Activated T-helper 1 cell treated with anti-CD3 and anti-CD28 coated beads, Interleukin-12 subunit alpha, Interleukin-12 subunit beta, Interleukin-2, Interleukin-4 antibody, amounts not matched to agents 30 ng/mL and 10 ng/mL and 1 ng/mL, durations not matched to agents 14 hours and 24 hours and 36 hours (primary cell): ENCODE measurements at regions of chr1 and their contacts with region 1.

Region 1: DNA sequence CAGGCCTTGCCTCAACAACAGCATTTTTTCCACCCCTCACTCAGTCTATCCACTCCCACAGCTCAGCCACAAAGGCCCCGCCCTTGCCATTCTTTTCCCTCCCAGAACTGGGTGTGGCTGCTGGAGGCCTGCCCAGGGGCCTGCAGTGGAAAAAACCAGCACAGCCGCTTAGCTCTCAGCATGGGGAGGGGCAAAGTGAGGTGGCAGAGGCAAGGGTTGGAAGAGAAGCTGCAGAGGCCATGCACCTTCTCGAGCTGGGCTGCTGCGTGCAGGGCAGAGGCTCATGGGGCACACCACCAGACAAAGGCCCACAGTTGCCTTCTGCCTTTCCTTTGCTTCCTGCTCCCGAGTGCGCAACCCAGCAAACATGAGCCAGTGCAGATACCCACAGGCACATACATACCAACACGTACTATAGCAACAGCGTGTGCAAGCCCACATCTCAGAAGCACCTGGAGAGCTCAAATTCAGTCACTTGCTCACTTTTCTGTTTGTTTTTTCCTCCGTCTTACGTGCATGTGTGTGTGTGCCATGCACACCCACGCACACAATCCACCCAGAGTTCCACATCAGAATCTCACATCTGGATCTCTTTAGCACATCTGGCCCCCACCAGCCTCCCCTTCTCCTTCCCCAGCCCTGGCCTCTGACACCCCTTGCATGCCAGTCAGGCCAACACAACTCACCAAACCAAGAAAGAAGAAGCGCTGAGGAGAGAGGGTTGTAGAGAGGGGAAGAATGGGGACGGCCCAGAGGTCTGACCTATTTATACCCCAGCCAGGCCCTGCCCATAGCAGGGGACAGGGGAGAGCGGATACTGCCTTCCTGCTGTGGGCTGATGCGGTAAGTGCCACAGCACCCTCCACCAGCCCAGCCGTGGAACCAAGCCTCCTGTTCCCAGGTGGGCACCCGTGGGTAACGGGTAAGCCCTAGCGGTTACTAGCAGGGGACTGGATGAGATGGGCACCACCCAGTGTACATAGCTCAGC is at the start of gene S100A4:
- DNase-seq: peak; percentile 93
- H3K4me3 Mint-ChIP-seq: peak within 1 kb of the TSS; percentile 90
- H3K27ac Mint-ChIP-seq: peak within 1 kb of the TSS; percentile 99
- H3K4me1 Mint-ChIP-seq: peaks cover 83% of the 10 kb centered on the region
- H3K27me3 Mint-ChIP-seq: peaks cover 2% of the 10 kb centered on the region
- total RNA-seq, gene S100A4: 165 and 167 TPM in 2 replicates

Region 2: DNA sequence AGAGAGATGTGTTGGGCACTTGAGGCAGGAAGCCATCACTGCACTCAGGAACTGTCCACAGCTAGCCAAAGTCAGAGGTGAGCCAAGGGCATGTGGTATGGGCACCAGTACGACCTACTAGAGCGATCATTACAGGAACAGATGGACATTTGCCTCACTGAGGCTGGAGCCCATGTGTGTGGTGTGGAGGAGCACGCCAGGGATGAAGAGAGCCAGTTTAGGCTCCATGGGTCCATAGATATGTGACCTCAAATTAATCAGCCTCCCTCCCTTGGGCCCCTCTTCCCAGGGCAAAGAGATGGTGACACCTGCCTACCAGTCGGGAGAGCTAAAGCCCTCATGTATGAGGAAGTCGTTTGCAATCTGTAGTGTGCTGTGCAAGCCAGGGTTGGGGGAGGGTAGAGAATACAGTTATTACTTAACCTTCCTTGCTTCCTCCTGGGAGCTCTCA is 200.8 kb before region 1 on chr1:
- intact Hi-C with region 1: no loop called
- DNase-seq: no peak
- H3K4me3 Mint-ChIP-seq: no peak overlapping the region
- H3K27ac Mint-ChIP-seq: no peak overlapping the region
- H3K4me1 Mint-ChIP-seq: peaks cover 51% of the 10 kb centered on the region
- H3K27me3 Mint-ChIP-seq: peaks cover 19% of the 10 kb centered on the region

Region 3: DNA sequence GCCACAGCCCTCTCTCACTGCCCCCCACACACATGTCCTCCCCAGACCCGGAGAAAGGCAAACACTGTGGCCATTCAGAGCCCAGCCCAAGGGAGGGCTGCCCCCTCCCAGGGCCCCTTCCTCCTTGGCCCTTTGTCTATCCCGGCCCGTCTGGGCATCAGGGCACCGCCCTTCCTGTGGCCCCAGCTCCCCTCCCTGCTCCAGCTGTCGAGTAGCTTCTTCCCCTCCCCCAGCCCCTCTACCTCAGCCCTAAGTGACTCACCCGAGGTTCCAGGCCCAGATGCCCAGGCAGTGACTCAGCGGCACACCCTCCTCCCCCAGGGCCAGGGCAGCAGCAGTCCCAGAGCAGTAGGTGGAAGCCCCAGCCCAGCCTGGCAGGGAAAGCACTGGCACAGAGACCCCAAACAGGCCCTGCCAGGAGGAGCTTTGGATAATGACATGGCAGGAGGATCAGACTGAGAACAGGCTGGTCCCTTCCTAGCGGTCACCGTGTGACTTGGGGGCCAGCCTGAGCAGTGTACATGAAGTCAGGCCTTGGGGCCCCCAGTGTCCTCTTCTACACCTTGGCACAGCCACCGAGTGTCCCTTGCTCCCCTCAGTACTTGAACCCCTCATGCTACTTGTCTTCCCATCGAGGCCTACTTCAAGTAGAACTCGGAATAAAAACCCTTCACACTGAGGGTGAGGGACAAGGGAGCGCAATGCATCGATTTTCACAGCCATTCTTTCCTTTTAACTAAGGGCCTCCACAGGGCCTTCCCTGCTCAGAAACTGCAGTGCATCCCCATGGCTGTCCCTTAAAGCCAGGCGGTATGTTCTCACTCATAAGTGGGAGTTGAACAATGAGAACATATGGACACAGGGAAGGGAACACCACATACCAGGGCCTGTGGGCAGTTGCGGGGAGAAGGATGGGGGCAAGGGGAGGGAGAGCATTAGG is 21.3 kb after region 1 on chr1:
- intact Hi-C with region 1: loop called (anchors 1 kb)
- DNase-seq: peak; percentile 72
- H3K4me3 Mint-ChIP-seq: peak overlapping the region; percentile 38
- H3K27ac Mint-ChIP-seq: peak overlapping the region; percentile 89
- H3K4me1 Mint-ChIP-seq: peaks cover 38% of the 10 kb centered on the region
- H3K27me3 Mint-ChIP-seq: peaks cover 1% of the 10 kb centered on the region

Region 4: GRCh38 chr1:153698020-153698931 is 152.9 kb after region 1 on chr1:
- intact Hi-C with region 1: no loop called
- DNase-seq: no peak
- H3K4me3 Mint-ChIP-seq: no peak overlapping the region
- H3K27ac Mint-ChIP-seq: no peak overlapping the region
- H3K4me1 Mint-ChIP-seq: no peaks in the 10 kb centered on the region
- H3K27me3 Mint-ChIP-seq: no peaks in the 10 kb centered on the region

Region 5: GRCh38 chr1:154157520-154158306 is 612.4 kb after region 1 on chr1:
- intact Hi-C with region 1: no loop called
- DNase-seq: peak; percentile 79
- H3K4me3 Mint-ChIP-seq: peak overlapping the region; percentile 62
- H3K27ac Mint-ChIP-seq: peak overlapping the region; percentile 70
- H3K4me1 Mint-ChIP-seq: peaks cover 65% of the 10 kb centered on the region
- H3K27me3 Mint-ChIP-seq: no peaks in the 10 kb centered on the region